GM10248 (cell line): ENCODE measurements at regions of chr4 and their contacts with region 1.

Region 1: DNA sequence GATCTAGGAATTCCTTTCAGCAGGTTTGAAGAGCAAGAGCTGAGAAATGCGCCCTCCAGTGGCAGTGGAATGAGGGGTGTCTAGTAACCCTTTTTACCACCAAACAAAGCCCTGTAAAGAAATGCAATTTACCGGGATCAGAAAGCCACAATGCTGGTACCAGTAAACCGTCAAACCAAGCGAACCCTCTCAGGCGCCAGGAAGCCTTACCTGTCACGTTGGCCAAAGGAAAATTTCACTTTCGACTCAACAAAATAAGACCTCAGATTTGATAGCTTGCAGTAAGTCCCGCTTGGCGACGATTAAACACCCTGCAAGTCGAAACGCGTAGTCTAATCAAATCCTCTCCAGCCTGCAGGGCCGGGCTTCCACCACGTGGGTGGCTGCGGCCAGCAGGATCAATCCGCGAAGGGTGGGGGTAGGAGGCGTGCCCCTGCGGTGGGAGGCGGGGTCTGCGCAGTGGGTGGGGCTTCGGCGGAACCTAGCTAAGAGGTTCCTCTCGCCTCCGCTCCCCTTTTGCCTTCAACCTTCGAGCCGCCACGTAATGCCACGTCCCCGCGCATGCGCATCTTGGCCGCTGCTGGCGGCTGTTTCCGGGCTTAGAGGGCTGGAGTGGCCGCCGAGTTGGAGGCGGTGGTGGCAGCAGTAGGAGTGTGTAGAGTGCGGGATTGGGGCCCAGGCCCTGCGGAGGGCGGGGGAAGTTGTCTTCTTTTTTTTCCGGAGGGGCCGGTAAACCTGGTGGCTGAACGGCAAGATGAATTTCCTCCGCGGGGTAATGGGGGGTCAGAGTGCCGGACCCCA is at the start of gene USO1:
- DNase-seq: peak; percentile 97
- CTCF ChIP-seq: peak; percentile 68

Region 2: GRCh38 chr4:75673027-75673958 is 51.0 kb before region 1 on chr4 and contains the start of gene G3BP2:
- CTCF ChIA-PET with region 1: interaction called, 20 read pairs
- POLR2A ChIA-PET with region 1: interaction called, 9 read pairs
- DNase-seq: peak; percentile 98
- CTCF ChIP-seq: no peak

Region 3: DNA sequence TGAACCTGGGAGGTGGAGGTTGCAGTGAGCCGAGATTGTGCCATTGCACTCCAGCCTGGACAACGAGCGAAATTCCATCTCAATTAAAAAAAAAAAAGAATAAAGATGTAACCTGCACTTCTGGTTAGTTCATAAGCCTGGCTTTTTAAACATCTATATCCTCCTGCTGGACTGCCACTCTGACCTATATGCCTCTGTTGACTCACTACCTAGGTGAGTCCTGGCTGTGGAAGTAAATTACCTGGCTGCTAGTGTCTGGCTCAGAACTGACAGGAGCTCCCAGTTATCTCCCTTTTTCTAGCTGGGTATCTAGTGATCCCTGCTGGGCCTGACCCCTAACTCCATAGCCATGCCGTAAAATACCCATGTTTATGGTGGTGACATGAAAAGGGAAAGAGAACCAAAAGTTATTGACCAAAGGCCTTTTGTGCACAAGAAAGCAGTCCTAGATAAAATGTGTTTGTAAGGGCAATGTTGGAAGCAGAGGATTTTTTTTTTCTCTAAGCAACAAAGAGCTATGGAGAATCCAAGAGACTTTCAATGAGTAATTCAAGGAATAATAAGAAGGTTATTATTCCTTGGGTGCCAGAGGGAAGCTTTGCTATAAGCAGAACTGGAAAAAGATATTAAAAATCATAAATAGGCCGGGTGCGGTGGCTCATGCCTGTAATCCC is 40.6 kb before region 1 on chr4:
- CTCF ChIA-PET with region 1: interaction called, 11 read pairs
- POLR2A ChIA-PET with region 1: no interaction called
- DNase-seq: no peak
- CTCF ChIP-seq: no peak

Region 4: GRCh38 chr4:75698162-75698962 is 25.9 kb before region 1 on chr4:
- CTCF ChIA-PET with region 1: interaction called, 15 read pairs
- POLR2A ChIA-PET with region 1: interaction called, 3 read pairs
- DNase-seq: peak; percentile 63
- CTCF ChIP-seq: no peak

Region 5: DNA sequence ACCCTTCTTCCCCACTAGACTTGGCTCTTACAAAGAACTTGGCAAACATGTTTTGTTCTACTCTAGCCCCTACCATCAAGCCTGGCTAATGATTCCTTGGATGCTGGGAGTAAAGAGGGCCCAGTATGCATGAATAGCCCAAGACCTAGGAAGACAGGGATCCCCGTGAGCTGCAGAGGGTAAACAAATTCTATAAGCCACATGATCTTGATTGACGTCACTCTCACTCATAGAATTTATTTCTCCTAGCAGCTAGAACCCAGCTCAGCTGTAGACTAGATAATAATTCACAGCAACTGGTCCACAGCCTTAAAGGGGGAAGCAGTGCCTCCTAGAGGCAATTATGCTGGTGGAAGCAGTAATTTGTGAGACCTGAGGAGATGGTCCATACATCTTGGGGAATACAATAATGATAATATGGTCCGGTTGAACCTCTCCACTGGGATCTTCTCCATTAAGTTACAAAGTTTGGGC is 16.0 kb before region 1 on chr4:
- CTCF ChIA-PET with region 1: interaction called, 101 read pairs
- POLR2A ChIA-PET with region 1: interaction called, 9 read pairs
- DNase-seq: peak; percentile 39
- CTCF ChIP-seq: peak; percentile 54

Region 6: DNA sequence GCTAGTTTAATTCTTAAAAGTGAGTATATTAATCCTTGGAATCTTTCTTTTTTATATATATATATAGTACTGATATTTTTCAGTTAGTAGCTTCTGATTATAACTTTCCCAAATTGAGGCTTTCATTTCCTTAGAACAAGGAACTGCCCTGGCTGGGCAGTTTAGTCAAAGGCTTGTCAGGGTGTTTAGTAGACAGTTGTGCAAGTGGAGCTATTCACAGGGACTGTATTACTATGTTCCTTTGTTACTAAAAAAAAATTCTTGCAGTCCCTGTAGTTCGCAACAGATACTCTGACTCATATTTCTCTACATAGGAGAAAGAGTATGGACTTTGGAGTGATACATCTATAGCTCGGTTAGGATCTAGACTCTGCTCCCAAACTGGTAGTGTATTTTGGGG is 20.9 kb after region 1 on chr4:
- CTCF ChIA-PET with region 1: interaction called, 11 read pairs
- POLR2A ChIA-PET with region 1: interaction called, 10 read pairs
- DNase-seq: no peak
- CTCF ChIP-seq: no peak